ENCODE measurements at regions of chr17 and their contacts with region 1.

Region 1: GRCh38 chr17:57747221-57748017 is 2.3 kb upstream of the CCDC182 start:
- DNase-seq: peak in 1 of 2 donors; percentile 24
- ATAC-seq: peak; percentile 62 to 87
- H3K4me3 ChIP-seq: no peak overlapping the region
- H3K27ac ChIP-seq: no peak overlapping the region
- H3K4me1 ChIP-seq: no peaks in the 10 kb centered on the region
- H3K27me3 ChIP-seq: no peaks in the 10 kb centered on the region
- CTCF ChIP-seq: peak; percentile 52 to 76 (median 58)
- POLR2A ChIP-seq: no peak

Region 2: DNA sequence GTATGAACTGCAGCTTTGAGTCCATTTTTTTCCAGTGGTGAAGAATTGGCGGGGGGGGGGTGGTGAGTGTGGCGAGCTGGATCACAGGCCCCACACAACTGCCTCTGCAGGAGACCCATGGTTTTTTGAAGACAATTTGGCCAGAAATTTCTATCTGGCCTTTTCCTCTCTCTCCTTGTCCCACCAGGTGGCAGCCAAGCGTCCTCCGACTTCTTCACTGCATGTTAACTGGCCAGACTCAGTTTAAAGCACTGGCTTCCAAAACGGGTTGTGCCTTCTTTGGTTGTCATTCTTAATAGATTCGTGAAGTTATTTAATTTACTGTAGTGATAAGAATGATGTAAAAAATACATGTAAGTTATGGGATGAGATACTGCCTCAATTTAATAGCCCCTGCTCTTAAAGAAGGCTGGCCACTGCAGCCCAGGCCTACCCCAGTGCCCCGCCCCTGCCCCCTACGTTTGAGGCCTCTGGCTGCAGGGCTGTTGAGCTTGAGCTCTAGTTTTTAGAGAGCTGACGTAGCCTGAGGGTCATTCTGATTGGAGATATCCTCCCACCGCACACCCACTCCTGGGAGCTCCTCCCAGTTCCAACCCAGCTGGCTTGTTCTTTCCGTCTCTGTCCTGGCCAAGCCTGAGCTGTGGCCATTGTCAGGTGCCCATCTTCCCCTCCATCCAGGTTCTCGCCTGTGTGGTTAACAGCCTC is 625.9 kb before region 1 on chr17:
- in situ Hi-C with region 1: loop called (anchors 5 to 25 kb)
- intact Hi-C with region 1: no loop called
- DNase-seq: no peak
- ATAC-seq: no peak
- H3K4me3 ChIP-seq: no peak overlapping the region
- H3K27ac ChIP-seq: no peak overlapping the region
- H3K4me1 ChIP-seq: peaks cover 0 to 6% of the 10 kb centered on the region in 2 donors
- H3K27me3 ChIP-seq: no peaks in the 10 kb centered on the region
- CTCF ChIP-seq: peak in 3 of 5 experiments; percentile 21 to 52 (median 27)
- POLR2A ChIP-seq: no peak

Region 3: DNA sequence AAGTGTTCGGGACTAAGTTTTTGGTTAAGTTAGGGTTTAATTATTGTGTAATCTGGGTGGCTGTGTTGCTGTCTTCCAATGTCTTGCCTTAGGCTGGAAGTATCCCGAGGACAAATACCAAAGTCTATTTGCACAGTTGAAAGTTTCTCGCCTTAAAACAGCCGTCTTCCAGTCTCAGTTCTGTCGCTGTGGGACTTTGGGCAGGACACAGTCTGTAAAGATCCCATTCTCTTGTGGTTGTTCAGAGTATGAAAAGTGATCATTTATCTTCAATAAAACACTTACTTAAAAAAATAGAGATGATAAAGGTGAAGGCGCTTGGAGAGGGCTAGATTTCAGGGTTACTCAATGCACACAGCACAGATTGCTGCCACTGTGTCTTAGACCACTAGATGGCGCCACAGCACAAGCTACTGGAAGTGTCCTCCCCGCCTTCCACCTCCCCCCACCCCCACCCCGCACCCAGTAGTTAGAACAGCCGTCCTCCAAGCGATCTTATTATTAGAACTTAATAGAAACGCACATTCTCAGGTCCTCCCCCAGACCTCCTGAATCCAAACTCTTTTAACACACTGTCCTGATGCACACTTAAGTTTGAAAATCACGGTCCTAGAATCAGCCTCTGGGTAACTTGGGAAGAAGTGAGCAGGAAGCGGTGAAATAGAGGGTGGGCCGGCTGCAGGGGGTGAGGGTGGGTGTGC is 616.5 kb before region 1 on chr17:
- in situ Hi-C with region 1: loop called in 3 of 4 experiments (anchors 10 to 25 kb)
- intact Hi-C with region 1: loop called (anchors 1 kb)
- DNase-seq: peak; percentile 67 to 79
- ATAC-seq: peak; percentile 94 to 98
- H3K4me3 ChIP-seq: peak overlapping the region in 2 of 4 donors; percentile 15 to 25
- H3K27ac ChIP-seq: no peak overlapping the region
- H3K4me1 ChIP-seq: peaks cover under 1 to 2% of the 10 kb centered on the region in 2 donors
- H3K27me3 ChIP-seq: no peaks in the 10 kb centered on the region
- CTCF ChIP-seq: peak; percentile 60 to 95 (median 78)
- POLR2A ChIP-seq: no peak

Region 4: DNA sequence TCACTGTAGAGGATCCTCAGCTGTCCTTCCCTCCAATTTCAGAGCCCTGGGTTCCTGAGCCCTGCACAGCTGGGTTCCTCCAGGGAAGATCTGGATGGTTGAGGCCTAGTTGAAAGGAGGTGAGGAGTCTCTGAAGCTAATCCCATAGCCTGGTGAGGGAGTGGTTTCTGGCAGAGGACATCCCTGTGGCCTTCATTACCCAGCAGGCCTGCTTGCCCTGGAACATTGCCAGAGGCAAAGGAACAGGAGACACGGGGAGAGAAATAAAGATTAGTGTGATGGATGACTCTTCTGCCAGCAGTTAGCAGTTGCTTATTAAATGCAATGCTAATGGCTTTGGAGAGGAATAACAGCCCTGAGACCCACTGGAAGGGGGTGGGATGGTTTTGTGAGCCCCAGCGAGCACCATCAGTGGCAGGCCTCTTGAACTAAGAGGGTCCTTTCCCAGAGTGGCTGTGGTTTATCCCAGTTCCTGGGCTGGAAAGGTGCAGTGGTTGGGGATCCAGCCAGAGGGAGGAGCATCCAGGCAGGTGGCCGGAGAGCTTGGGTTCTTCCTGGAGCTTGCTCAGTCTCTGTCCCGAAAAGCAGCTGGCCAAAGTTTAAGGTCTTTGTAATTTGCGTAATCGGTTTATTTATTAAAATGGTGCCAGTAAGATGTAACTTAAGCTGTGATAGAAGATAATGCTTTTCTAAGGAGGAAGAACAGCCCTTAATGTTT is 212.0 kb before region 1 on chr17:
- in situ Hi-C with region 1: no loop called
- intact Hi-C with region 1: no loop called
- DNase-seq: peak in 1 of 2 donors; percentile 35
- ATAC-seq: peak; percentile 17 to 18
- H3K4me3 ChIP-seq: no peak overlapping the region
- H3K27ac ChIP-seq: no peak overlapping the region
- H3K4me1 ChIP-seq: peaks cover 14 to 18% of the 10 kb centered on the region in 2 donors
- H3K27me3 ChIP-seq: no peaks in the 10 kb centered on the region
- CTCF ChIP-seq: no peak
- POLR2A ChIP-seq: no peak

Measured in gastrocnemius medialis (tissue), 4 donors.